Naive thymus-derived CD8-positive, alpha-beta T cell (primary cell): ENCODE measurements at regions of chr18 and their contacts with region 1.

Region 1: GRCh38 chr18:11947214-11948191 is 33.8 kb upstream of the IMPA2 start:
- DNase-seq: peak; percentile 37 to 76 (median 51)
- ATAC-seq: peak; percentile 88 to 94
- H3K4me3 Mint-ChIP-seq: peak overlapping the region; percentile 83 to 93 (median 87)
- H3K27ac Mint-ChIP-seq: peak overlapping the region; percentile 60 to 95 (median 92)
- H3K4me1 Mint-ChIP-seq: peaks cover 2 to 14% (median 11%) of the 10 kb centered on the region in 4 donors
- H3K27me3 Mint-ChIP-seq: peaks cover 0 to 2% (median 0%) of the 10 kb centered on the region in 5 donors

Region 2: DNA sequence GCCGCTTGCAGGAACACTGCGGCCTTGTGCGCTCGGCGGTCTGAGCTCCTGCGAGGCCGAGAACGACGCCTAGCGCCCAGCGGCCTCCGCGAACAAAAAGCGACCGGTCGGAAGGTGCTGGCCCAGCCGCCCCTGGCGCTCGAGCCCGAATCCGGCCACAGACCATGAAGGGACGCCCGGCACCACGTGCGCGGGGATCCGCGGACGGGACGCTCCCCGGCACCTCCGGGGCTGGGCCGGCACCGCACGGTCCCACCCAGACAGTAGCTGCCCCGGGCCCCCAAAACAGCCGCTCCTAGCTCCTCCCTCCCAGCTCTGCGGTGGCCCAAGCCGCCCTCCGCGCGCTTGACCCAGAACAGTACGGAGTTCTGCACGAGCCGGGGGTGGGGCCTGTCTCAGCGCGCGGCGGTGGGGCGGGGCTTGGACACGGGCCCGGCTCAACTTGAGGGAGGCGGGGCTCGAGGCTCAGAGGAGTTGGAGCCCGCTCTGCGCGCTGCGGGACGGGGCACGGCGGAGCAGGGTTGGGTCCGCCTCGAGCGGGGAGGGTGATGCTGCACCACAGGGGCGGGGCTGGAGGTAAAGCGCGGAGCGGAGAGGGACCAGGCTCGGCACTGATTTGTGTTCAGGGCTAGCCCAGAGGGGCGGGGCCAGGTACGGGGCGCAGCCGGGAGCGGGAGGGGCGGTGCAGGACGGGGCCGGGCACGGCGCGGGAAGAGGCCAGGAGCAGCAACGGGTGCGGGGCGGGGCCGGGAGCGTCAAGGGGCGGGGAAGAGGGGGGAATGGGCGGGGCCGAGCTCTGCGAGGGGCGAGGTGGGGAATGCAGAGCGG is 33.3 kb after region 1 on chr18:
- POLR2A ChIA-PET with region 1: interaction called, 15 read pairs
- DNase-seq: peak; percentile 88 to 96 (median 92)
- ATAC-seq: peak; percentile 90 to 95
- H3K4me3 Mint-ChIP-seq: peak overlapping the region; percentile 82 to 92 (median 86)
- H3K27ac Mint-ChIP-seq: peak overlapping the region in 8 of 10 donors; percentile 43 to 88 (median 69)
- H3K4me1 Mint-ChIP-seq: peaks cover 4 to 21% (median 17%) of the 10 kb centered on the region in 4 donors
- H3K27me3 Mint-ChIP-seq: peaks cover 0 to 7% (median 0%) of the 10 kb centered on the region in 5 donors